ENCODE measurements at regions of chr5 and their contacts with region 1.

Region 1: GRCh38 chr5:7927466-7928375 is 58.8 kb downstream of the MTRR start:
- DNase-seq: peak; percentile 57 to 69
- H3K4me3 ChIP-seq: no peak overlapping the region
- H3K4me1 ChIP-seq: no peaks in the 10 kb centered on the region
- H3K27me3 ChIP-seq: no peaks in the 10 kb centered on the region

Region 2: DNA sequence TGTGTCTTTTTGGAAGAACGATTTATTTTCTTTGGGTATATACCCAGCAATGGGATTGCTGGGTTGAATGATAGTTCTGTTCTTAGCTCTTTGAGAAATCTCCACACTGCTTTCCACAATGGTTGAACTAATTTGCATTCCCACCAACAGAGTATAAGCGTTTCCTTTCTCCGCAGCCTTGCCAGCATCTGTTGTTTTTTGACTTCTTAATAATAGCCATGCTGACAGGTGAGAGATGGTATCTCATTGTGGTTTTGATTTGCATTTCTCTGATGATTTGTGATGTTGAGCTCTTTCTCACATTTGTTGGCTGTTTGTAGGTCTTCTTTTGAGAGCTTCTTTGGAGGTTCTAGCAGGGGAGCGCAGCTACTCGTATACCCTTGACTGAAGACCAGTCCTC is 1079.8 kb before region 1 on chr5:
- in situ Hi-C with region 1: no loop called
- DNase-seq: no peak
- H3K4me3 ChIP-seq: no peak overlapping the region
- H3K4me1 ChIP-seq: no peaks in the 10 kb centered on the region
- H3K27me3 ChIP-seq: no peaks in the 10 kb centered on the region

Region 3: DNA sequence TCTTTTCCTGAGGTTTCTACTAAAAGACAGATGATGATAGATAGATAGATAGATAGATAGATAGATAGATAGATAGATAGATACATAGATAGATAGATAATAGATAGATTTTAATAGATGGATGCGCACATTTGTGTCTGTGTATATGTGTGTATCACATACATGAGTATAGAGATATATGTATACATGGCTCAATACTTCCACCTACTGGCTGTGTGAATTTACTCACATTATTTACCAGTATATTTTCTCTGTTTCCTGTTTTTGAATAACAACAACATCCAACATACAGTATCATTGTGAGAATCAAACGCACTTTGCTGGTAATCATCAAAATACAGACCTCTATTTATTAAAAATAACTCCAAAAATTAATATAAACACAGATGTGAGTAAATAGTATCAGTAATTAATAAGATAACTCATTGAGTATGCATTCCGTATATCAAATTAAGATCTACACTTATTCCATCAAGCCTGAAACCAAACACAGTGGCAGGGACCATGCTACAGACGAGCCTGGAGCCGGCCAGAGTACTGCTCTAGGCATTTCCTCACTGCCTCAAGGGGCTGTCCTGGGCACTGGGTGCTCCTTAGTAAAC is 1280.2 kb after region 1 on chr5:
- in situ Hi-C with region 1: loop called (anchors 25 kb)
- DNase-seq: peak in 1 of 2 experiments; percentile 2
- H3K4me3 ChIP-seq: no peak overlapping the region
- H3K4me1 ChIP-seq: no peaks in the 10 kb centered on the region
- H3K27me3 ChIP-seq: no peaks in the 10 kb centered on the region